Uterus (tissue), 4 donors: ENCODE measurements at regions of chr20 and their contacts with region 1.

Region 1: GRCh38 chr20:44609511-44610312 is 27.3 kb downstream of the PKIG start:
- DNase-seq: peak; percentile 90 to 91
- H3K4me3 ChIP-seq: peak overlapping the region; percentile 14 to 23
- H3K27ac ChIP-seq: peak overlapping the region; percentile 84 to 86
- H3K4me1 ChIP-seq: peaks cover 0 to 6% of the 10 kb centered on the region in 2 donors
- H3K27me3 ChIP-seq: no peaks in the 10 kb centered on the region
- CTCF ChIP-seq: peak; percentile 98 to 100 (median 99)
- POLR2A ChIP-seq: no peak

Region 2: DNA sequence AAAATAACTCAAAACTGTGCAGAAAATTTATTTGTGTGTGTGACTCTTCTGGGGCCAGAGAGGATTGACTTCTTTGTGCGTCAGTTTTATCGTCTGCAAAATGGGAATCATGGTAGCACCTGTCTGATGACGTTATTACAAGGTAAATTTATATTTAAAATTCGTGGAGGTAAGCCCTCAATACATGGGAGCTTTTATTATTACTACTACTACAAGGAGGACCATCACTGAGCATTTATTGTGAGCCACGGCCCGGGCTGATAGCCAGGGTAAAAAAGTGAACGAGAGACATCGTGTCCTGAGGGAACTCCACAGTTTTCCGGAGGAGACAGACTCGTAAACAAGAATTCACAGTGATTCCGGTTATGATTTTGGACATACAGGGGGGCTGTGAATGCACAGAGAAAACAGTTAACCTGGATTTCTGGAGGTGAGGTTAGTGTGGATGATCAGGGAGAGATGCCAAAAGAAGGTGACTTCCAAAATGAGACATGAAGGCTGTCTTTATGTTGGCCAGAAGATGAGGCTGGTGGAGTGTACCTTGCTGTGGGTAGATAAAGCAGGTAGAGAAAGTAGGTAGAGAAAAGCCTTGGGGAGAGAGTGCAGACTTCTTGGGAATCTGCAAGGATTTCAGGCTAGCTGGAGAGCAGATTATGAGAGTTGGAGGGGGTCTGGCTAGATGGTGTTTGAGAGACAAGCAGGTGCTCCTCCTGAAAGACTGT is 77.3 kb before region 1 on chr20:
- intact Hi-C with region 1: loop called (anchors 5 kb)
- DNase-seq: peak; percentile 28 to 46
- H3K4me3 ChIP-seq: peak overlapping the region; percentile 59 to 91
- H3K27ac ChIP-seq: peak overlapping the region; percentile 86 to 87
- H3K4me1 ChIP-seq: no peaks in the 10 kb centered on the region
- H3K27me3 ChIP-seq: no peaks in the 10 kb centered on the region
- CTCF ChIP-seq: no peak
- POLR2A ChIP-seq: no peak